B cell (primary cell): ENCODE measurements at regions of chr1 and their contacts with region 1.

Region 1: GRCh38 chr1:172870901-172871606 is 179.7 kb downstream of the TNFSF18 start:
- DNase-seq: no peak
- ATAC-seq: no peak
- H3K4me3 ChIP-seq: no peak overlapping the region
- H3K4me3 Mint-ChIP-seq: no peak overlapping the region
- H3K27ac ChIP-seq: no peak overlapping the region
- H3K27ac Mint-ChIP-seq: no peak overlapping the region
- H3K4me1 ChIP-seq: peaks cover 0 to 6% of the 10 kb centered on the region in 2 donors
- H3K4me1 Mint-ChIP-seq: peaks cover 8% of the 10 kb centered on the region
- H3K27me3 ChIP-seq: no peaks in the 10 kb centered on the region
- H3K27me3 Mint-ChIP-seq: no peaks in the 10 kb centered on the region
- CTCF ChIP-seq: no peak

Region 2: DNA sequence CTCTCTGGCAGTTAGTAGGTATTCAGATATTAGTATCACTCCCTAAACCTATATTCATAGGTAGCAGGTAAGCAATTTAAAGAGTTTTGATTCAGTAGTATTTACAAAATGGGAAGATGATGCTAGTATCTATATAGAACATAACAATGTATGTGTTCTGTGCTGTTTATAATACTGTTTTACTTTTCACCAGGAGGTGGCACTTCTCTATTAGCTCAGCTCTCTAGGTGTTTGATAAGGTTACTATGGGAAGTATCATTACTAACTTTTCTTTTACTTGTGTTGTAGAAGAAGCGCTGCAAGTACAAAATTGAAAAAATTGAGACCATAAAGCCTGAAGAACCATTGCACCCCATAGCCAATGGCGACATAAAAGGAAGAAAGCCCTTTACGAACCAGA is 261.5 kb before region 1 on chr1:
- CTCF ChIA-PET with region 1: no interaction called
- POLR2A ChIA-PET with region 1: no interaction called
- intact Hi-C with region 1: no loop called
- DNase-seq: no peak
- ATAC-seq: no peak
- H3K4me3 ChIP-seq: no peak overlapping the region
- H3K4me3 Mint-ChIP-seq: no peak overlapping the region
- H3K27ac ChIP-seq: no peak overlapping the region
- H3K27ac Mint-ChIP-seq: no peak overlapping the region
- H3K4me1 ChIP-seq: no peaks in the 10 kb centered on the region
- H3K4me1 Mint-ChIP-seq: no peaks in the 10 kb centered on the region
- H3K27me3 ChIP-seq: no peaks in the 10 kb centered on the region
- H3K27me3 Mint-ChIP-seq: no peaks in the 10 kb centered on the region
- CTCF ChIP-seq: no peak

Region 3: GRCh38 chr1:172938676-172939075 is 67.6 kb after region 1 on chr1:
- CTCF ChIA-PET with region 1: no interaction called
- POLR2A ChIA-PET with region 1: no interaction called
- intact Hi-C with region 1: loop called (anchors 10 kb)
- DNase-seq: no peak
- ATAC-seq: no peak
- H3K4me3 ChIP-seq: no peak overlapping the region
- H3K4me3 Mint-ChIP-seq: no peak overlapping the region
- H3K27ac ChIP-seq: no peak overlapping the region
- H3K27ac Mint-ChIP-seq: no peak overlapping the region
- H3K4me1 ChIP-seq: peaks cover 7% of the 10 kb centered on the region in 2 donors
- H3K4me1 Mint-ChIP-seq: peaks cover 16% of the 10 kb centered on the region
- H3K27me3 ChIP-seq: no peaks in the 10 kb centered on the region
- H3K27me3 Mint-ChIP-seq: no peaks in the 10 kb centered on the region
- CTCF ChIP-seq: no peak